Activated naive CD4-positive, alpha-beta T cell treated with anti-CD3 and anti-CD28 coated beads for 36 hours (primary cell): ENCODE measurements at regions of chr5 and their contacts with region 1.

Region 1: GRCh38 chr5:141878711-141879425 is 658 bp upstream of the PCDH1 start:
- DNase-seq: peak; percentile 96
- H3K4me3 Mint-ChIP-seq: peak overlapping the region; percentile 65
- H3K27ac Mint-ChIP-seq: no peak overlapping the region
- H3K4me1 Mint-ChIP-seq: peaks cover 19% of the 10 kb centered on the region
- H3K27me3 Mint-ChIP-seq: peaks cover 62% of the 10 kb centered on the region

Region 2: DNA sequence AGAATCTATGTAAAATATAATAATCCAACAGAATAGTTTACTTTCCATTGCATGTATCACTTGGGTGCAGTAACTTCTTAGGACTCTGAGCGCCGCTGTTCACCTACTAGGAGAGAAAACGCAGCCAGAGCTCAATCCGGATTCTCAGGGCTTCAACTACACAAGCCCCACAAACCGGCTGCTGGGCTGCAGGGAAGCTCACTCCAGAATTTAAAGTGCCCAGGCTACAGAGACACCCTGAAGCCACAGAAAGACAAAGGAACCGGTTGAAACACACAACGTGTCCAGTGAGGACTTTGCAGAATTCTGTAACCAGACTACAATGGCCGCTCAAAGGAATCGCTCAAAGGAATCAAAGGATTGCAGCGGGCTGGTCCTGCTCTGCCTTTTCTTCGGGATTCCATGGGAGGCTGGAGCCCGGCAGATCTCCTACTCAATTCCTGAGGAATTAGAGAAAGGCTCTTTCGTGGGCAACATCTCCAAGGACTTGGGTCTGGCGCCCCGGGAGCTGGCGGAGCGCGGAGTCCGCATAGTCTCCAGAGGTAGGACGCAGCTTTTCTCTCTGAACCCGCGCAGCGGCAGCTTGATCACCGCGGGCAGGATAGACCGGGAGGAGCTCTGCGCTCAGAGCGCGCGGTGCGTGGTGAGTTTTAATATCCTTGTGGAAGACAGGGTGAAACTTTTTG is 465.9 kb before region 1 on chr5 and contains the start of gene PCDHGA10:
- CTCF ChIA-PET with region 1: no interaction called
- intact Hi-C with region 1: loop called (anchors 10 kb)
- DNase-seq: peak; percentile 73
- H3K4me3 Mint-ChIP-seq: peak within 1 kb of the TSS; percentile 78
- H3K27ac Mint-ChIP-seq: no peak within 1 kb of the TSS
- H3K4me1 Mint-ChIP-seq: peaks cover 16% of the 10 kb centered on the region
- H3K27me3 Mint-ChIP-seq: peaks cover 69% of the 10 kb centered on the region
- total RNA-seq, gene PCDHGA10: 0.05 TPM in 1 of 2 experiments, not detected in the other

Region 3: DNA sequence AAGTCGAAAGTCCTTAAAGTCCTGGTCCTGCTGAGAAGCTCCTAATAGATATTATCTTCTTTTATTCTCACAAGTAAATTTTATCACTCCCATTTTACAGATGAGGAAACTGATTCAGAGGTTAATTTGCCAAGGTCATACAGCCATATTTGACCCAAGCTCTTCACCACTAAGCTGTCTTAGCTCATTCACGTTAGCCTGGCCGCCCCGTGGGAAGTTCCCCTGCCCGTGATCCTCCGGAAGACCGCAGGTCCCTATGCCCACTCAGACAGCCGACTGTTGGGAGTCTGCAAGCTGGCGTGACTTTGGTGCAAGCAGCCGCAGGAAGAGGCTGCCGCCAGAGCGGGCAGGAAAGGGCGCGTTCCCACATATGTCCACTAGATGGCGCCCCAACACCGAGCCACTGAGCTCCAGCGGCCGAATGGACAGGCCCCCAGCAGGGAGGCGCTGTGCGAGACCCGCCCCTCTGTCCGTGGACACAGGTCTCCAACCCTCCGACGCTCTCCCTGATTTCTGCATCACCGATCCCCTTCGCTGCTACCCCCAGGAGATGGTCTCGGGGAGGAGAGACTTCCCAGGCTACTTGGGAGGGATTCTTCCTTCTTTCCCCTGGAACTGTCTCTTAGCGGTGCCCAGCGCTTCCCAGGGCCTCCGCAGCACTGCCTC is 186.9 kb before region 1 on chr5:
- CTCF ChIA-PET with region 1: interaction called, 161 read pairs
- intact Hi-C with region 1: loop called (anchors 1 kb)
- DNase-seq: peak; percentile 90
- H3K4me3 Mint-ChIP-seq: peak overlapping the region; percentile 53
- H3K27ac Mint-ChIP-seq: no peak overlapping the region
- H3K4me1 Mint-ChIP-seq: peaks cover 20% of the 10 kb centered on the region
- H3K27me3 Mint-ChIP-seq: peaks cover 7% of the 10 kb centered on the region

Region 4: GRCh38 chr5:141753971-141754713 is 124.7 kb before region 1 on chr5:
- CTCF ChIA-PET with region 1: interaction called, 9 read pairs
- intact Hi-C with region 1: loop called (anchors 5 kb)
- DNase-seq: peak; percentile 61
- H3K4me3 Mint-ChIP-seq: no peak overlapping the region
- H3K27ac Mint-ChIP-seq: no peak overlapping the region
- H3K4me1 Mint-ChIP-seq: peaks cover 4% of the 10 kb centered on the region
- H3K27me3 Mint-ChIP-seq: peaks cover 44% of the 10 kb centered on the region

Region 5: DNA sequence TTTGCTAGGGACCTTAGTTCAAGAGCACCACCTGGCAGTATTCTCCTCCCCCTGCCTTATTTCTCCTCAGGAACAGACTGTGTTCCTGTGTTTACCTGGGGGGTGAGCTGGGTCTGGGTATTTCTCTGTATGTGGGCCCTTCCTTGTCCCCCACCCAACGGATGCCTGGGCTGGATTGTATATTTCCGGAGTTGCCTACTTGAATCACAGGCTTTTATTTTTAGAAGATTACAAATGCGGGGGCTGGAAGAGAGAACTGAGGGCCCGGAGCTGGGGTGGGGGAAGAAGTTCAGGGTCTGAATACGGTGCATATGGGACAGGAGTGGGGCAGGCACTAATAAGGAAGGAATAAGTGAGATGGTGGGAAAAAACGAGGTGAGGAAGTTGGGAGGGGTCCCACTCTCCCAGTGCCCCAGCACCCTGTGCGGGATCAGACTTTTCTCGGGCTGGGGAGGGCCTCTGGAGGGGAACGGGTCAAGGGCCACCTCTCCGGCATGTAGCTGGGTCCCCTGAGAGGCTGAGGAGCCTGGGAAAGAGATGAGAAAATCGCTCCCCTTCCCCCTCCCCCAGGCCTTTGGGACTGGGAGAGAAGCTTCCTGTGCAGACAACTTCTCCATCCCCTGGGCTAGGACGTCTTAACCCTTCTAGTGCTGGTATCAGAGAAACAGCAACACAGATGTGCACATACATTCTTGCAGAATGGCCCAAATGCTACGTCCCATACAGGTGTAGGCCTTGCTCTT is 42.8 kb before region 1 on chr5:
- CTCF ChIA-PET with region 1: interaction called, 12 read pairs
- intact Hi-C with region 1: no loop called
- DNase-seq: no peak
- H3K4me3 Mint-ChIP-seq: no peak overlapping the region
- H3K27ac Mint-ChIP-seq: no peak overlapping the region
- H3K4me1 Mint-ChIP-seq: peaks cover 16% of the 10 kb centered on the region
- H3K27me3 Mint-ChIP-seq: peaks cover 2% of the 10 kb centered on the region

Region 6: GRCh38 chr5:141889282-141889871 is 10.5 kb after region 1 on chr5:
- CTCF ChIA-PET with region 1: interaction called, 22 read pairs
- intact Hi-C with region 1: no loop called
- DNase-seq: peak; percentile 29
- H3K4me3 Mint-ChIP-seq: no peak overlapping the region
- H3K27ac Mint-ChIP-seq: no peak overlapping the region
- H3K4me1 Mint-ChIP-seq: no peaks in the 10 kb centered on the region
- H3K27me3 Mint-ChIP-seq: peaks cover 24% of the 10 kb centered on the region

Region 7: GRCh38 chr5:142034994-142035393 is 156.1 kb after region 1 on chr5:
- CTCF ChIA-PET with region 1: no interaction called
- intact Hi-C with region 1: no loop called
- DNase-seq: no peak
- H3K4me3 Mint-ChIP-seq: no peak overlapping the region
- H3K27ac Mint-ChIP-seq: no peak overlapping the region
- H3K4me1 Mint-ChIP-seq: peaks cover 19% of the 10 kb centered on the region
- H3K27me3 Mint-ChIP-seq: no peaks in the 10 kb centered on the region

Region 8: DNA sequence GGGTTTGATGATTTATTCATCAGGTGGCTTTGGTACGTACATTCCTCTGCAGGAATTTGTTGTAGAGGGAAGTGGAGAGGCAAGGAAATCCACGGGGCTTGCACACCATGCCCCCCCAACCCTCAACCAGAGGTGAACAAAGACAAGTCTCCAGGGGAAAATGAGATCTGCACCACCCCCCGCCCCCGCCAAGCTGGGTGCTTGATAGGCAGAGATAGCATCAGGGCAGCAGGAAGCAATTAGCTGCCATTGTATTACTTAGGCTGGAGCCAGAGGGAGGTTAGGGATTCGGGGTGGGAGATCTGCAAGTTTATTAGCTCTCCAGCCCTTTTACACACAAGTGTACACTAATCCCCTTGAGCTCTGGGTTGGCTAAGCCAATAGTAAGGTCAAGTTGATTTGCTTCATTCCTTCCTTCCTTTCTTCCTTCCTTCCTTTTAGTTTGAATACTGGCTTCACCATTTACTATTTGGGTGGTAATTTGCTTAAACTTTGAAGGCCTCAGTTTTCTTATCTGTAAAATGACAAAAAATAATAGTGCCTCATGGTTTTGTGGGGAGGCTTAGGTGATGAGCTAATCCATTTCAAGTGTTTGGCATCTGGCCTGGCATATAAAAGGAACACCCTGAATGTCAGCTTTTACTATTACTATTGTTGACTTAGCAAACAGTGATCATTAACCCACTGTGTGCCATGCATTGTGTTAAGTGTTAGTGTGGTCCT is 411.9 kb after region 1 on chr5:
- CTCF ChIA-PET with region 1: no interaction called
- intact Hi-C with region 1: no loop called
- DNase-seq: no peak
- H3K4me3 Mint-ChIP-seq: no peak overlapping the region
- H3K27ac Mint-ChIP-seq: no peak overlapping the region
- H3K4me1 Mint-ChIP-seq: peaks cover 7% of the 10 kb centered on the region
- H3K27me3 Mint-ChIP-seq: no peaks in the 10 kb centered on the region

Region 9: GRCh38 chr5:142938266-142938880 is 1059.5 kb after region 1 on chr5:
- CTCF ChIA-PET with region 1: no interaction called
- intact Hi-C with region 1: no loop called
- DNase-seq: no peak
- H3K4me3 Mint-ChIP-seq: no peak overlapping the region
- H3K27ac Mint-ChIP-seq: no peak overlapping the region
- H3K4me1 Mint-ChIP-seq: peaks cover 11% of the 10 kb centered on the region
- H3K27me3 Mint-ChIP-seq: no peaks in the 10 kb centered on the region